ENCODE measurements at regions of chr5 and their contacts with region 1.

Region 1: GRCh38 chr5:849651-850301 is 1.0 kb downstream of the ZDHHC11 start:
- DNase-seq: no peak
- H3K4me3 ChIP-seq: peak overlapping the region in 1 of 3 experiments; percentile 2
- H3K27ac ChIP-seq: no peak overlapping the region
- H3K4me1 ChIP-seq: peaks cover 3% of the 10 kb centered on the region
- H3K27me3 ChIP-seq: no peaks in the 10 kb centered on the region
- CTCF ChIP-seq: no peak

Region 2: DNA sequence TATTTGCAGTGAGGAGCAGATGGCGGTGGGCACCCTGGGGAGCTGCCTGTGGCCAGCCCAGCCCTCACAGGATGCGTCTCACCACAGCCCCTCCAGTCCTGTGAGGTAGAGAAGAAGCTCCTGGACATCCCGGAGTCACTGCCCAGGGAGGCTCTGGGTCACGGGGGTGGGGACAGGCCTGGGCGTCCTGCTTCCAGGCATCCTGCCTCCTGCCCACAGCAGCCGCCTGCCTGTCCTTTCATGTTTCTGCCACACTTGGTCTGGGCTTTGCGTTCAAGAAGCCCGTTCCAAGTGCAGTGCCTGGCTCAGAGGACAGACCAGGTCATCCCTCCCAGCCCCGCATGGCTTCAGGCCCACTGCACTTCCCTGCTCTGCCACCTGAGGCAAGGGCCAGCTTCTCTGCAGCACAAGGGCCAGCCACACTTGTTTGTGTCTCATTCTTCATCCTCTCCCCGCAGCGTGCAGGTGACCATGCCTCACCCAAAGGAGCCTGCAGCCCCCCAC is 103.5 kb before region 1 on chr5:
- CTCF ChIA-PET with region 1: no interaction called
- dilution Hi-C with region 1: no loop called
- in situ Hi-C with region 1: no loop called
- intact Hi-C with region 1: loop called (anchors 5 kb)
- DNase-seq: no peak
- H3K4me3 ChIP-seq: no peak overlapping the region
- H3K27ac ChIP-seq: no peak overlapping the region
- H3K4me1 ChIP-seq: no peaks in the 10 kb centered on the region
- H3K27me3 ChIP-seq: no peaks in the 10 kb centered on the region
- CTCF ChIP-seq: no peak

Region 3: DNA sequence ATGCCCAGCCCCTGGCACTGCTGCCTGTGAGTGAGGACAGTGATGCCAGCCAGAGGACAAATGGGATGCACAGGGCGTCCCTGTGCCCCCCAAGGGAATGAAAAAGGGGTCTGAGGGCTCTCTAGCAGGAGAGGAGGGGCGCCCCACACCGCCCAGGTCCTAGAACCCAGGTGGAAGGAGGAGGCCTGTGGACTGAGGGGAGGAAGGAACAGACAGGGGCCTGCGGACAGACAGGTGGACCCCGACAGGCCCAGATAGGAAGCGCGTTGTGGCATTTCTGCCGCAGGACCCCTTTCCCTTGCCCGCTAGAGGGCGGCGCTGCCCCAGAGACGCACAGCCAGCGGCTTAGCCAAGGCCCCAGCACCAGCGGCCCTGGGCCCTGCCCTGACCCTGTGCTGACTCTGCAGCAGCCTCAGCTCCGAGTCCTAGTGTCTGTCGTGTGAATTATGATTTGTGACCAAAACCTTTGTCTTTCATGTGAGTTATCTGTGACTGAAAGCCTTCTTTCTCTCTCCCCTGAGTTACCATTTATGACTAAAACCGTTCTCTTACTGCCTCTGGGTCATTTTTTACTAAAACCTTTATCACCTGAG is 73.6 kb after region 1 on chr5:
- CTCF ChIA-PET with region 1: no interaction called
- dilution Hi-C with region 1: no loop called
- in situ Hi-C with region 1: no loop called
- intact Hi-C with region 1: no loop called
- DNase-seq: peak; percentile 43
- H3K4me3 ChIP-seq: no peak overlapping the region
- H3K27ac ChIP-seq: no peak overlapping the region
- H3K4me1 ChIP-seq: no peaks in the 10 kb centered on the region
- H3K27me3 ChIP-seq: peaks cover 6% of the 10 kb centered on the region
- CTCF ChIP-seq: peak; percentile 75 to 93

Measured in mammary epithelial cell (primary cell).